ENCODE measurements at regions of chr5 and their contacts with region 1.

Region 1: DNA sequence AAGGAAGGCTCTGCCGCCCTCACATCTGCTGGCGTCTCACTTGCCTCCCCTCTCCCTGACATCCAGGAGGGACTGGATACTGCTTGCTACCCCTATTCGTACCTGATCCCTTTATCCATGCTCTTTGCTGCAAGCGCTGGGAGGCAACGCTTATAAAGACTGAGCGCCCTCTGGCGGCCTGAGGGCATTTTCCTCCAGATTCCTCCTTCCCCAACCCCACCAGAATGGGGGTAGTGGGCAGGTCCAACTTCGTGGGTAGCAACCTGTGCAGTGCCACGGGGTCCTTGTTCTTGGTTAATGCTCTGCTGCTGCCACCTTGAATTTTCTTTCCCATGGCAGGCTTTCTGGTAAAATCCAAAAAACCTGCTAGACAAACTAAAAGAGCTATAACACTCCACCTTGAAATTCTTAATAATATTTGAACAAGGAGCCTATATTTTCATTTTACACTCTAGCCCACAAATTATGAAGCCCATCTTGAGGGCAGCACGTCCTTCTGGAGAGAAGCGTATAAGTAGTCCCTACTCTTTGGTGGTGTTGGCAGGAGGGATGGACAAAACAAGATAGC is 52.4 kb downstream of the JADE2 start:
- DNase-seq: peak; percentile 84
- CTCF ChIP-seq: peak; percentile 91

Region 2: DNA sequence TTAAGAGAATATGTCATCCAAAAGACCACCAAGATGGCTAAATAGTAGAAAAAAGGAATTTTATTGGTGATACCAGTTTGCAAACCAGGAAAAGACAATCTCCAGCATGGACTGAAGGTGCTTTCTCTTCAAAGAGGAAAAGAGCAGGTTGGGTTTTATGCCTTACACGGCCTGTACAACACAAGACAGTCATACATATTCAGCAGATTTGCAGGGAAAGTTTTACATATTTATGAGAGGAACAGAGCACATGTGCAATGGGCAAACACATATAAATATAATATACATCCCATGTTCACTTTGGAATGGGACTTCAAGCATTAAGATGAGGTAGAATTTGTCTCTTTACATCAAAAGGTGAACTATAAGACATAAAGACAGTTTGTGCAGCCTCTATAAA is 281.7 kb before region 1 on chr5:
- CTCF ChIA-PET with region 1: interaction called, 19 read pairs
- POLR2A ChIA-PET with region 1: no interaction called
- DNase-seq: no peak
- CTCF ChIP-seq: no peak

Region 3: DNA sequence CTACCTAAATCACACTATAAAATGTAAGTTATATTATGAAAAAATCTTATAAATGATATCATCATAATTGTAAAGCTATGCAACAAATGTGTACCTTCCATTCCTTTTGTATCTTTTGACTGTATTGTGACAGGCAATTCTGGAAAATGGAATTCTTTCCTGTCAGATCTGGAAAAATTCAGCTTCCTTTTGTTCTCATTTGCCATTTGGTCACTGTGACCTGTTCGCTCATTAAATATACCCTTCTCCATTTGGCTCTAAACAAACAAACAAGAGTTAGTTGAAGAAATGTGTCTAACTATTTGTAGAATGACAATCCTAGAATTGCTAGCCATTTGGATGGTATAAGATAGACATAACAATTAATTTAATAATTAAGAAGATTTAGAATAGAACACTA is 273.6 kb before region 1 on chr5:
- CTCF ChIA-PET with region 1: interaction called, 21 read pairs
- POLR2A ChIA-PET with region 1: no interaction called
- DNase-seq: no peak
- CTCF ChIP-seq: no peak

Region 4: GRCh38 chr5:134411546-134412266 is 166.2 kb before region 1 on chr5 and contains the start of gene CDKN2AIPNL:
- CTCF ChIA-PET with region 1: interaction called, 14 read pairs
- POLR2A ChIA-PET with region 1: no interaction called
- DNase-seq: peak; percentile 96
- CTCF ChIP-seq: peak; percentile 95

Region 5: GRCh38 chr5:134527146-134527960 is 50.5 kb before region 1 on chr5:
- CTCF ChIA-PET with region 1: interaction called, 30 read pairs
- POLR2A ChIA-PET with region 1: interaction called, 6 read pairs
- DNase-seq: peak; percentile 88
- CTCF ChIP-seq: peak; percentile 76

Region 6: GRCh38 chr5:134555890-134556311 is 22.0 kb before region 1 on chr5:
- CTCF ChIA-PET with region 1: interaction called, 22 read pairs
- POLR2A ChIA-PET with region 1: interaction called, 3 read pairs
- DNase-seq: peak; percentile 73
- CTCF ChIP-seq: no peak

Region 7: GRCh38 chr5:134561871-134562296 is 16.0 kb before region 1 on chr5:
- CTCF ChIA-PET with region 1: interaction called, 27 read pairs
- POLR2A ChIA-PET with region 1: no interaction called
- DNase-seq: no peak
- CTCF ChIP-seq: peak; percentile 31